ENCODE measurements at regions of chr12 and their contacts with region 1.

Region 1: GRCh38 chr12:113196996-113197395 is 11.5 kb downstream of the RITA1 start:
- DNase-seq: peak; percentile 55
- H3K4me3 Mint-ChIP-seq: no peak overlapping the region
- H3K27ac Mint-ChIP-seq: no peak overlapping the region
- H3K4me1 Mint-ChIP-seq: peaks cover 11% of the 10 kb centered on the region
- H3K27me3 Mint-ChIP-seq: no peaks in the 10 kb centered on the region

Region 2: GRCh38 chr12:113208041-113208934 is 11.3 kb after region 1 on chr12:
- intact Hi-C with region 1: loop called (anchors 1 kb)
- DNase-seq: peak; percentile 72
- H3K4me3 Mint-ChIP-seq: peak overlapping the region; percentile 75
- H3K27ac Mint-ChIP-seq: peak overlapping the region; percentile 96
- H3K4me1 Mint-ChIP-seq: peaks cover 65% of the 10 kb centered on the region
- H3K27me3 Mint-ChIP-seq: no peaks in the 10 kb centered on the region

Region 3: DNA sequence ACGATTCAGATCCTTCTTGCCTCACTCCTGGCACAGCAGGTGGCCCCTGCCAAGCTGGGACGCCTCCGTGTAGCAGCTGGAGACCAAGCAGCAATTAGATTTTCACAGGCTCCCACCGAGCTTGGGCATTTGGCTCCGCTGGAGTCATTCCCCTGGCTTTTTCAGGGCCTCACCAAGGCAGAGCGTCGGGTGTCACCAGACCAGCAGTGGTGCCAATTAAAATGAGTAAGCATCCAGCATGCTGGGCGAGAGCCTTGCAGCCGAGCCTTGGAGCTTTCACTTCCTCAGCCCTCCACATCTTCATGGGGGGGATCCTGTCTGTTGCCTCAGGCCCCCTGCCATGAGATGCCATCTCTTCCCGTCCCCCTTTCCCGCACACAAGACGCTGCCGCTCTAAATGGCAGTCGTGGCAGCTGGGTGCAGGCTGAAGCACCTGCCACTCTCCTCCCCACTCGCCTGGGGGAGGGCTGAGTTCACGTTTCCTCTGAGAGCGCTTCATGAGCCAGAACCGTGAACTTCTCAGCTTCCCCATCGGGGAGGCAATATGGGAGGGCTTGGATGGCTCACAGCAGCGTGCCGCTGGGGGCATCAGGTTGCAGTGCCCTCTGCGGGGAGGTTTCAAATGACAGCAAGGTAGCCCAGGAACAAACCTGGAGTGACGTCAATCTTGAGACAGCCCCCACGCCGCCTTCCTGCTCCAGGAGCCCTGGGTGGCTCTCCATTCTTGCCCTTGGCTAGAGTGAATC is 36.0 kb after region 1 on chr12:
- intact Hi-C with region 1: loop called (anchors 1 kb)
- DNase-seq: peak; percentile 47
- H3K4me3 Mint-ChIP-seq: peak overlapping the region; percentile 79
- H3K27ac Mint-ChIP-seq: peak overlapping the region; percentile 88
- H3K4me1 Mint-ChIP-seq: peaks cover 61% of the 10 kb centered on the region
- H3K27me3 Mint-ChIP-seq: no peaks in the 10 kb centered on the region

Region 4: DNA sequence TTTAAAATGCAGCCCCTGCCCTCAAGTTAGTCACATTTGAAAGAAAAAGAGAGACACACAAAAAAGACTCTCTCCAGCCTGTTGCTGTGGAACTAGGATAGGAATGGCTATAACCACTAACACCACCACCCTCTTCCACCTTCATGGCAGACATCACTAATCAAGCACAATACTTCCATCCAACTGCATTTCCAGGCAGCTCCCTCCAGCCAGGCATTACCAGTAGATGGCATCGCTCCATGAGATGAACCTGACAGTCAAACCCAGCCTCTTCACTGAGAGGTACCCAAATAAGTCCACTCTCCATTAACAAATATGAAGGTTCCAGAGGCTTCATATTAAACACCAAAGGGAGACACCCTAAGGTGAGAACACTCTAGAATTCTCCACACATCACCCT is 113.5 kb after region 1 on chr12:
- intact Hi-C with region 1: loop called (anchors 5 kb)
- DNase-seq: no peak
- H3K4me3 Mint-ChIP-seq: no peak overlapping the region
- H3K27ac Mint-ChIP-seq: no peak overlapping the region
- H3K4me1 Mint-ChIP-seq: no peaks in the 10 kb centered on the region
- H3K27me3 Mint-ChIP-seq: no peaks in the 10 kb centered on the region

Region 5: GRCh38 chr12:113422030-113422885 is 225.3 kb after region 1 on chr12 and contains the start of gene SDSL:
- intact Hi-C with region 1: loop called (anchors 1 kb)
- DNase-seq: peak; percentile 17
- H3K4me3 Mint-ChIP-seq: peak within 1 kb of the TSS; percentile 81
- H3K27ac Mint-ChIP-seq: peak within 1 kb of the TSS; percentile 79
- H3K4me1 Mint-ChIP-seq: peaks cover 11% of the 10 kb centered on the region
- H3K27me3 Mint-ChIP-seq: peaks cover 4% of the 10 kb centered on the region
- total RNA-seq, gene SDSL: 0.52 and 0.54 TPM in 2 replicates

Measured in activated T-helper 1 cell treated with anti-CD3 and anti-CD28 coated beads, Interleukin-12 subunit alpha, Interleukin-12 subunit beta, Interleukin-2, Interleukin-4 antibody, amounts not matched to agents 30 ng/mL and 10 ng/mL and 1 ng/mL, durations not matched to agents 14 hours and 24 hours and 36 hours (primary cell).